Calu3 (cell line): ENCODE measurements at regions of chr7 and their contacts with region 1.

Region 1: GRCh38 chr7:50206453-50207250 is 97.9 kb upstream of the IKZF1 start:
- DNase-seq: no peak
- H3K4me3 Mint-ChIP-seq: no peak overlapping the region
- H3K27ac Mint-ChIP-seq: no peak overlapping the region
- H3K4me1 Mint-ChIP-seq: peaks cover 7% of the 10 kb centered on the region
- H3K27me3 Mint-ChIP-seq: peaks cover 96% of the 10 kb centered on the region
- CTCF ChIP-seq: no peak

Region 2: GRCh38 chr7:50092579-50093491 is 113.8 kb before region 1 on chr7 and contains the start of gene ZPBP:
- CTCF ChIA-PET with region 1: interaction called, 6 read pairs
- intact Hi-C with region 1: loop called (anchors 1 kb)
- DNase-seq: peak; percentile 38
- H3K4me3 Mint-ChIP-seq: no peak within 1 kb of the TSS
- H3K27ac Mint-ChIP-seq: no peak within 1 kb of the TSS
- H3K4me1 Mint-ChIP-seq: no peaks in the 10 kb centered on the region
- H3K27me3 Mint-ChIP-seq: peaks cover 44% of the 10 kb centered on the region
- CTCF ChIP-seq: peak; percentile 87
- total RNA-seq, gene ZPBP: not detected in 2 replicates

Region 3: GRCh38 chr7:50369143-50370026 is 162.7 kb after region 1 on chr7:
- CTCF ChIA-PET with region 1: no interaction called
- intact Hi-C with region 1: loop called (anchors 2 kb)
- DNase-seq: no peak
- H3K4me3 Mint-ChIP-seq: no peak overlapping the region
- H3K27ac Mint-ChIP-seq: no peak overlapping the region
- H3K4me1 Mint-ChIP-seq: no peaks in the 10 kb centered on the region
- H3K27me3 Mint-ChIP-seq: peaks cover 83% of the 10 kb centered on the region
- CTCF ChIP-seq: peak; percentile 68

Region 4: GRCh38 chr7:50418086-50418515 is 211.4 kb after region 1 on chr7:
- CTCF ChIA-PET with region 1: interaction called, 26 read pairs
- intact Hi-C with region 1: loop called (anchors 1 kb)
- DNase-seq: peak; percentile 90
- H3K4me3 Mint-ChIP-seq: no peak overlapping the region
- H3K27ac Mint-ChIP-seq: no peak overlapping the region
- H3K4me1 Mint-ChIP-seq: no peaks in the 10 kb centered on the region
- H3K27me3 Mint-ChIP-seq: peaks cover 16% of the 10 kb centered on the region
- CTCF ChIP-seq: peak; percentile 96

Region 5: DNA sequence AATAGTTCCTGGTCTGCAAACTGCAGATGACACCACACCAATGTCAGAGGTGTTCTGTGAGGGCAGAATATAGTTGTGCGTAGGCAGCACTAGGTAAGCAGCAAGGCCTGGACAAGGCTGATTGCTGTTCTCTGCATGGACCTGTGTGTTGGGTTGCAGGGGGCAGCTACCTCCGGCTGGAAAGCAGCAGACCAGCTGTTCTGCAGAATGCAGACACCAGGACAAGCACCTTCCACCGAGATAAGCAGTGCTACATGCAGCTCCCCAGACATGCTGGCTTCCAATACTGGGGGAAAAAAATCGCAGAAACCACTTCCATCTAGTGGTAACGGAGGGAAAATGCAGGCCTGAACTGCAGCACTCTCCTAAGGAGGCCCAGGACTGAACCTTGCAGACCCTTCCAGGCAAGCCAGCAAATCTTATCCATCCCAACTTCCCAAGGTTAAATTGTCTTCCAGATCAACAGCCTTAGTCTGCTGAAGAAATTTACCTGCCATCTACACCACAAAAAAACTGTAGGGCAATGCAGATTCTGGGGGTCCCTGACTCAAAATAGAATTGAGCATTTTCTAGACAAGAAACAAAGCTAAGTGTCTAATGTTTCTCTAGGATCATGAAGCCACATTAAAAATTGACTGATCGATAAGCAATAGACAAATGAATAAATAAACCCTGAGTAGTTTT is 1160.4 kb after region 1 on chr7:
- CTCF ChIA-PET with region 1: no interaction called
- intact Hi-C with region 1: loop called (anchors 10 kb)
- DNase-seq: peak; percentile 76
- H3K4me3 Mint-ChIP-seq: no peak overlapping the region
- H3K27ac Mint-ChIP-seq: no peak overlapping the region
- H3K4me1 Mint-ChIP-seq: peaks cover 9% of the 10 kb centered on the region
- H3K27me3 Mint-ChIP-seq: peaks cover 13% of the 10 kb centered on the region
- CTCF ChIP-seq: peak; percentile 90